ENCODE measurements at regions of chr4 and their contacts with region 1.

Region 1: GRCh38 chr4:156261230-156261629 is 307.6 kb upstream of the CTSO start:
- DNase-seq: no peak
- ATAC-seq: no peak
- H3K4me3 ChIP-seq: no peak overlapping the region
- H3K27ac ChIP-seq: no peak overlapping the region
- H3K4me1 ChIP-seq: no peaks in the 10 kb centered on the region
- H3K27me3 ChIP-seq: no peaks in the 10 kb centered on the region

Region 2: GRCh38 chr4:156901871-156902270 is 640.6 kb after region 1 on chr4:
- intact Hi-C with region 1: loop called in 1 of 4 experiments (anchors 10 kb)
- DNase-seq: no peak
- ATAC-seq: peak in 1 of 2 donors; percentile 31
- H3K4me3 ChIP-seq: no peak overlapping the region
- H3K27ac ChIP-seq: no peak overlapping the region
- H3K4me1 ChIP-seq: no peaks in the 10 kb centered on the region
- H3K27me3 ChIP-seq: no peaks in the 10 kb centered on the region

Measured in right cardiac atrium (tissue), 5 donors.